GM13976 (cell line): ENCODE measurements at regions of chr10 and their contacts with region 1.

Region 1: DNA sequence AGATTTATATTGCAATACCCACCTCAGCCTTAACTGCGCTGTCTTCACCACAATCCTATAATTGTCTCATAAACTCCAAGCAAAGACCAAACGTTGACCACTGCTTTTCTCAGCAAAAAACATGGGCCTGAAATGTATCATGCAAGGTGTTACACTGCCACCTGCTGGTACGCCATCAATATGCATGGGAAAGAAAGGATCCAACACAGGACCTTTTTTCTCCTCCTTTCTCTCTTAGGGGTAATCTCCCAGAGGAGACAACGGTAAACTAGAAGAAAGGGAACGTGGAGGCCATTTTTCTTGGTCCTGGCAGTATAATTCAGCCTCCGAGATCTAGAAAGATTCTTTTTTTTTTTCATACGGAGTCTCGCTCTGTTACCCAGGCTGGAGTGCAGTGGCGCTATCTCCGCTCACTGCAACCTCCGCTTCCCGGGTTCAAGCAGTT is 79.1 kb upstream of the MPP7 start:
- DNase-seq: peak; percentile 62
- CTCF ChIP-seq: peak; percentile 85

Region 2: GRCh38 chr10:27558612-27559020 is 823.3 kb before region 1 on chr10:
- in situ Hi-C with region 1: loop called (anchors 25 kb)
- DNase-seq: peak; percentile 70
- CTCF ChIP-seq: peak; percentile 56

Region 3: DNA sequence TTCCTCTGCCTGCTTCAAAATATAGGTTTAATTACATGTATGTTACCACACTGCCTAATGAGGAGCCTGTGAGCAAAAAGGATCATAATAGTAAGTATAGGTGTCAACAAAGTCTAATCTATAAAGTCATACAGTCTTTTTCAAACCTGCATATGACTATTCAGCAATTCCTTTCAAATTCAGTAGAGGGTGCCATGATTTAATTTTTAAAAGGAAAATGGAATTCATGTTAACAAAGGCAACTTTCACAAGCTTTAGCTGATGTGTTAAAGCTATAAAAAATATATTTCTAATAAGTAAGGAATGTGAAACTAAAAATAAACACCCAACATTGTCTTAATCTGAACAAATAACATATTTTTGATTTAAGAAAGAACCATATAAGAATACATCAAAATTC is 131.1 kb before region 1 on chr10:
- in situ Hi-C with region 1: loop called (anchors 10 kb)
- DNase-seq: peak; percentile 15
- CTCF ChIP-seq: no peak